ENCODE measurements at regions of chr2 and their contacts with region 1.

Region 1: DNA sequence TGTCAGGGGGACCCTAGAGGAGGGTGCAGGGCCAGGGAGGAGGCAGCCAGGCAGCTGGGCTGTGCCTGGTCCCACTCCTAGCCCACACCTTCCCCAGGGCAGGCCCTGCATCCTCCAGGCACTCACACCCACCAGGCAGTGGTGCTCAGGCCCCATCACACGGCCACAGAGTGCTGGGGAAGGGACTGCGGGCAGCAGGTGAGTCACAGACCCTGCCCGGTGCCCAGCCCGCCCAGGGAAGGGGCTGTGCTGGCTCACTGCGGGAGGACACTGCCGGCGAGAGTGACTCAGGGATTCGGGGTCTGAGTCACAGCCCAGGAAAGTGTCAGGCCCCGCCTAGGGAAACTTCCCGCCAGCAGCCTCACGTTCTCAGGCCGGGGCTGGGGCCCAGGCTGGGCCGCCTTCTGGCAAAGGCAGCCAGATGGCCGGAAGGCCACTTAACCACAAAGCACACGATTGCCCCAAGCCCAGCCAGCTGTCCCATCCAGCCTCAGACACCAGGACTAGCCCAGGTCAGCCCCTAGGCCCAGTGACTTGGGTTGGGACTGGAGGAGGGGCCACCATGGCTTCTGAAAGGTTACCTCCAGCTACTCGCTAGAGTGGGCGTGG is 42.2 kb downstream of the BIN1 start:
- DNase-seq: peak; percentile 54
- H3K4me3 ChIP-seq: no peak overlapping the region
- H3K27ac ChIP-seq: peak overlapping the region; percentile 53 to 69
- H3K4me1 ChIP-seq: peaks cover 10% of the 10 kb centered on the region
- H3K27me3 ChIP-seq: no peaks in the 10 kb centered on the region
- CTCF ChIP-seq: peak in 1 of 4 experiments; percentile 28
- POLR2A ChIP-seq: no peak

Region 2: GRCh38 chr2:127174136-127174535 is 109.4 kb after region 1 on chr2:
- intact Hi-C with region 1: loop called (anchors 5 kb)
- DNase-seq: no peak
- H3K4me3 ChIP-seq: no peak overlapping the region
- H3K27ac ChIP-seq: peak overlapping the region in 1 of 2 donors; percentile 71
- H3K4me1 ChIP-seq: no peaks in the 10 kb centered on the region
- H3K27me3 ChIP-seq: no peaks in the 10 kb centered on the region
- CTCF ChIP-seq: no peak
- POLR2A ChIP-seq: no peak

Region 3: DNA sequence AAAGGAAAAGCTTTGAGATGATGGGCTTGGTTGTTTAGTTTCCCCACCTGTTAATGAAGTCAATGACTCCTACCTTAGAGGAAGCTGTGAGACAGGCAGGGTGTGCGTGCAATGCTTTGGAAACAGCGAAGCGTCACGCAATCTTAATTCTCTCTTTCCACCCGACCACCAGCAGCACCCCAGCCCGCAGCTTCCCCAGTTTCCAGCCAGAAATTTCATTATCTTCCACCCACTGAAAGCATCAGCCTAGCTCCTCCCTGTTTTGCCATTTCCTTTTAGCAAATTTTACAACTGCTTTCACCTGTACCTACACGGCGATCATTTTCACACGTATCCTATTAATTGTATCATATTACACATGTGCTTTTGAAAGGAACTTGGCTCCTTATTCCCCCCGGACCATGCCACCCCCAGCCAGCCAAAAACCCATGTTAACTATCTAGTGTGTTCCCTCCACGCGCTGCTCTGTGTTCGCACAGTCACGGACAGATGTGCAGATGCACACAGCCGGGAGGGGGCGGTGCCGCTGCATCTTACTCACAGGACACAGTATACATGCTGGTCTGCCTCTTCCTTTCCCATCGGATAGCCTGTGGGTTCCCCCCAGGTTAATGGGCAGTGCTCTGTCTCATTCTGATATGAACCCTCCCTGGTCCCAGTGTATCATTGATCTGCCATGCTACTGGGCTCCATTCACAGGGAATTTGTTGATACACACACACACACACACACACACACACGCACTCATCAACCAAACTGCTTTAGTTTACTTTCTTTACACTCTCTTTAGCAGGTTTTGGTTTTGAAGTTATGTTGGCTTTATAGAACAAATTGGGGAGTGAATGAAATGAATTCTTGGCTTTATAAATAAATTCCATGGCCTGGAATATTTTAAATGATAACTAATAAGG is 133.0 kb after region 1 on chr2:
- intact Hi-C with region 1: no loop called
- DNase-seq: peak; percentile 45
- H3K4me3 ChIP-seq: no peak overlapping the region
- H3K27ac ChIP-seq: no peak overlapping the region
- H3K4me1 ChIP-seq: no peaks in the 10 kb centered on the region
- H3K27me3 ChIP-seq: no peaks in the 10 kb centered on the region
- CTCF ChIP-seq: peak in 3 of 4 experiments; percentile 22 to 70 (median 48)
- POLR2A ChIP-seq: no peak

Region 4: DNA sequence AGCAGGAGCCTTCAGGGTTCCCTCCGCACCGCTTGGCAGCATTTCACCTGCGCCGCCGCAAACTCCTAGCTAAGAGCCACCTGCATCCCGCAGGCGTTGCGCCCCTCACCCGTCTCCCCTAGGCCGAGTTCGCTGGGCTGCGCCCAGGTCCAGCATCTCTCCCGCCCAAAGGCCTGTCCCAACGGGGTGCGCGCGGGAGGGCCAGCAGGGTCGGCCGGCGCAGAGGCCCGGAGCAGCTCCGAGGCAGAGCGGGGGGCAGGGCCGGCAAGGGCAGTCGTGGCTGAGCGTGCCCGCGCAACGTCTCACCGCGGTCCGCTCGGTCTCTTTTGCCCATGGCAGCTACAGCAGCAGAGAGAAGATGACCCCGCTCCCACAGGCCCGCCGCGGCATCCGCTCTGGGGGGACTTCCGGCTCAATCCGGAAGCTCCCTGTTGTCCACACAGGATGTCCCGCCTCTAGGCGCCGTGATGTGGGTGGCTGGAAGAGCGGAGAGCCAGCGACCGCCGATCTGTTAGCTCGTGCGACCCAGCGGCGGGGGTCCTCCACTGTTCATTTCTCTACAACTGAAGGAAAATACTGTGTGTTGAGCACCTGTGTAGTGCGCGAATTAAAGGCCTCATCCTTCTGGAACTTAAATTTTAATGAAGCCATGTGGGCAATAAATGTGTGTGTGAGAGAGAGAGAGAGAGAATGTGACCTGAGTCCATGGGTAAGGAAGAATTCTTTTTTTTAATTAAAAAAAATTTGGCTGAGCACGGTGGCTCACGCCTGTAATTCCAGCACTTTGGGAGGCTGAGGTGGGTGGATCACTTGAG is 229.2 kb after region 1 on chr2 and contains the start of gene ERCC3:
- intact Hi-C with region 1: loop called (anchors 2 kb)
- DNase-seq: peak; percentile 63
- H3K4me3 ChIP-seq: peak within 1 kb of the TSS; percentile 65 to 89
- H3K27ac ChIP-seq: peak within 1 kb of the TSS; percentile 42 to 77
- H3K4me1 ChIP-seq: peaks cover 3% of the 10 kb centered on the region
- H3K27me3 ChIP-seq: no peaks in the 10 kb centered on the region
- CTCF ChIP-seq: no peak
- POLR2A ChIP-seq: no peak
- total RNA-seq, gene ERCC3: 29.8 to 61.3 TPM

Measured in prostate gland (tissue), 2 donors.